ENCODE measurements at regions of chr21 and their contacts with region 1.

Region 1: GRCh38 chr21:15735409-15735808 is 5.6 kb downstream of the USP25 start:
- DNase-seq: no peak
- ATAC-seq: no peak
- H3K4me3 ChIP-seq: no peak overlapping the region
- H3K27ac ChIP-seq: no peak overlapping the region
- H3K4me1 ChIP-seq: peaks cover 3% of the 10 kb centered on the region; the same call in 1 of the 2 replicates
- H3K27me3 ChIP-seq: no peaks in the 10 kb centered on the region
- CTCF ChIP-seq: no peak
- POLR2A ChIP-seq: no peak
- RAD21 ChIP-seq: no peak

Region 2: GRCh38 chr21:15134701-15135470 is 600.5 kb before region 1 on chr21:
- CTCF ChIA-PET with region 1: no interaction called
- POLR2A ChIA-PET with region 1: no interaction called
- dilution Hi-C with region 1: no loop called
- in situ Hi-C with region 1: no loop called
- intact Hi-C with region 1: no loop called
- DNase-seq: no peak
- ATAC-seq: no peak
- H3K4me3 ChIP-seq: no peak overlapping the region
- H3K27ac ChIP-seq: no peak overlapping the region
- H3K4me1 ChIP-seq: no peaks in the 10 kb centered on the region
- H3K27me3 ChIP-seq: peaks cover 11% of the 10 kb centered on the region
- CTCF ChIP-seq: no peak
- POLR2A ChIP-seq: no peak
- RAD21 ChIP-seq: no peak

Region 3: GRCh38 chr21:15749082-15749860 is 13.9 kb after region 1 on chr21:
- CTCF ChIA-PET with region 1: interaction called, 3 read pairs
- POLR2A ChIA-PET with region 1: no interaction called
- dilution Hi-C with region 1: no loop called
- in situ Hi-C with region 1: no loop called
- intact Hi-C with region 1: loop called (anchors 2 kb)
- DNase-seq: peak; percentile 49
- ATAC-seq: peak; percentile 54
- H3K4me3 ChIP-seq: no peak overlapping the region
- H3K27ac ChIP-seq: no peak overlapping the region
- H3K4me1 ChIP-seq: peaks cover 5% of the 10 kb centered on the region
- H3K27me3 ChIP-seq: no peaks in the 10 kb centered on the region
- CTCF ChIP-seq: no peak
- POLR2A ChIP-seq: no peak
- RAD21 ChIP-seq: no peak

Region 4: GRCh38 chr21:15775981-15776380 is 40.6 kb after region 1 on chr21:
- CTCF ChIA-PET with region 1: no interaction called
- POLR2A ChIA-PET with region 1: no interaction called
- dilution Hi-C with region 1: no loop called
- in situ Hi-C with region 1: no loop called
- intact Hi-C with region 1: loop called (anchors 5 kb)
- DNase-seq: peak; percentile 89
- ATAC-seq: peak; percentile 81
- H3K4me3 ChIP-seq: no peak overlapping the region
- H3K27ac ChIP-seq: no peak overlapping the region
- H3K4me1 ChIP-seq: peaks cover 8% of the 10 kb centered on the region
- H3K27me3 ChIP-seq: no peaks in the 10 kb centered on the region
- CTCF ChIP-seq: no peak
- POLR2A ChIP-seq: no peak
- RAD21 ChIP-seq: no peak

Measured in IMR-90 (cell line).